Tibial artery (tissue), 4 donors: ENCODE measurements at regions of chr17 and their contacts with region 1.

Region 1: DNA sequence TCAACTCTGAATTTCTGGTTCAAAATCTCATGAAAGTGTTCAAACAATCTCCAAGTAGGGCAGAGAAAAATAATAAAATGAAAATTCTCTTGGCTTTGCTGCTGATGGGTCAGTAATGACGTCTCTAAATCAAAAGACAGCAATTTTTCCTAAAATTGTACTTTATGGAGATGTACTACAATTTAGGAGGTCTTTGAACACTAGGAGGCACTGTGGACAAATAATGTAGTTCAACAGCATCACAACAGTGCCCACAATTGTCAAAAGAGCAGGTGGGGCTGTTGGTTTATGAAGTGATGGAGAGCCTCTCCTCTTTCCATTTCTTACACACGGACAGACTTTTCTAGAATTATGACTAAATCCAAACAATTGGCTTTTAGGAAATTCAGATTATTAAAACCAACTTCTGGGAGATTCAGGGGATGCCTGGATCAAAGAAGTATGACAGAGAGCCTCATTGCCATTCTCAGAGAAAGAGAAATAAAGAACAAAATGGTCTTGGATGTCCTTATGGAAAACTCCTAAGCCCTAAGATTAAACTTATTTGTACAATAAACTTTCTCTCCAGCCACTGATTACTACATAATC is 23.8 kb downstream of the EZH1 start:
- DNase-seq: no peak
- H3K4me3 ChIP-seq: no peak overlapping the region
- H3K27ac ChIP-seq: no peak overlapping the region
- H3K4me1 ChIP-seq: no peaks in the 10 kb centered on the region
- H3K27me3 ChIP-seq: no peaks in the 10 kb centered on the region
- CTCF ChIP-seq: peak; percentile 57 to 68

Region 2: DNA sequence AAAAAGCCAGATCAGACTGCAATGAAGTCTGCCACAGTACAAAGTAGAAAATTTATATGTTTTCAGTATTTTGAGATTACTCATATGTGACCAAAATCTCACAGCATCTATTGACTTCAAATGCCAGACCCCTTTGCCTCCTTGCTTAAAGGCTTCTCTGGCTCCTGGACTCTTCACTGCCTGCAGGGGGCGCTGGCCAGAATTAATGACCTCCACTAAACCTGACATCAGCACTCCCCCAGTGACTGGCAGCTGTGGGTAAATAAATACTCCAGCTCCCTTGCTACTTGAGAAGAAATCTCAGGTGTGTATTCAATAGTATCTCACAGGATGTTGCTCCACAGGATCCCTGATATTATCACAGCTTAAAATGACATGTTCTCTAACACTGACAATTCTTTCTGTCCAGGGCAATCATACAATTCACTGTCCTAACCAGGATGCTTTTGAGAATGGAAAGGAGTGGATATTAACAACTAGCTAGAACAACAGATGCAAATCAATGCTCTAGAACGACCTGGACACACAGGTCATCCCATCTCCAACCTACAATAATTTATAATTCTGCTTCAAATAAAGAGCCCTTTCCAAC is 99.0 kb after region 1 on chr17:
- intact Hi-C with region 1: loop called (anchors 5 kb)
- DNase-seq: peak in 1 of 2 donors; percentile 42
- H3K4me3 ChIP-seq: no peak overlapping the region
- H3K27ac ChIP-seq: no peak overlapping the region
- H3K4me1 ChIP-seq: peaks cover 0 to 23% (median 15%) of the 10 kb centered on the region in 4 donors
- H3K27me3 ChIP-seq: no peaks in the 10 kb centered on the region
- CTCF ChIP-seq: peak; percentile 32 to 47